Esophagus muscularis mucosa (tissue), 4 donors: ENCODE measurements at regions of chrX and their contacts with region 1.

Region 1: DNA sequence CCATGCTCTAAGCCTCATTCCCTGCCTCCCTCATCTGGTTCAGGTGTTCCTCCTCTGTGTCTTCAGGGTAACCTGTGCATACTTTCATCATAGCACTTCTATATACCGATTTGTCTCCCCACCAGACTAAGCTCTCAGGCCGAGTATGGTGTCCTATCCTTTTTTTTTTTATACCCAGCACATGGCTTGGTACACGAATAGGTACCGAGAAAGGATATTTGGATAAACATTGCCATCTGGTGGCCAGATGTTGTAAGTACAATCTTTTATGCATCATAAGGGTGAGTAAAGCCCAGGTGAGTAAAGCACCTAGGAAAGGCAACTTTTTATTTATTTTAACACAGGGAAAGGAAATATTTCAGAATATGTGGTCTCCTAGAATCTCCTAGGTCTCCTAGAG is 68.4 kb downstream of the MID2 start:
- DNase-seq: no peak
- H3K4me3 ChIP-seq: no peak overlapping the region
- H3K27ac ChIP-seq: no peak overlapping the region
- H3K4me1 ChIP-seq: no peaks in the 10 kb centered on the region
- H3K27me3 ChIP-seq: no peaks in the 10 kb centered on the region
- CTCF ChIP-seq: peak; percentile 50 to 63 (median 59)
- EP300 ChIP-seq: no peak
- POLR2A ChIP-seq: no peak

Region 2: DNA sequence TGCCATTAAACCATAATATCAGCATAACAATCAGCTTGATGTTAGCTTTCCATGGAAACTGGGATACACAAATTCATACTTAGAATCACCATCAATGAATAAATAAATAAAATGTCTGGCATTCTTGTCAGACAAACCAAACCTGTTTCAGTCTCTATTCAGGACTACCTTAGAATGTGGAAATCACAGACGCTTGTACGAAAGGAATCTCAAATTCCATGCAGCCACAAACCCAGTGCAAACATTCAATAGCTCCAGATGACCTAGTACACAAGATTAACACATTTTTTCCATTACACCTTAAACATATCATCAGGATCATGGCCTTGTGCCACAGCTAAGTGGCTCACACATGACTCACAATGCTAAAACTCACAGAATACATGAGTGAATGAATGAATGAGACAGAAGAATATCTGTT is 1591.8 kb before region 1 on chrX:
- intact Hi-C with region 1: no loop called
- DNase-seq: no peak
- H3K4me3 ChIP-seq: no peak overlapping the region
- H3K27ac ChIP-seq: no peak overlapping the region
- H3K4me1 ChIP-seq: no peaks in the 10 kb centered on the region
- H3K27me3 ChIP-seq: no peaks in the 10 kb centered on the region
- CTCF ChIP-seq: no peak
- EP300 ChIP-seq: no peak
- POLR2A ChIP-seq: no peak

Region 3: GRCh38 chrX:106999002-106999975 is 894.7 kb before region 1 on chrX:
- intact Hi-C with region 1: loop called (anchors 10 kb)
- DNase-seq: no peak
- H3K4me3 ChIP-seq: peak overlapping the region; percentile 63 to 74 (median 67)
- H3K27ac ChIP-seq: peak overlapping the region; percentile 74 to 84 (median 83)
- H3K4me1 ChIP-seq: peaks cover 0 to 9% (median 2%) of the 10 kb centered on the region in 4 donors
- H3K27me3 ChIP-seq: no peaks in the 10 kb centered on the region
- CTCF ChIP-seq: peak; percentile 41 to 52 (median 48)
- EP300 ChIP-seq: no peak
- POLR2A ChIP-seq: no peak

Region 4: GRCh38 chrX:107654872-107655761 is 238.9 kb before region 1 on chrX:
- intact Hi-C with region 1: loop called (anchors 5 kb)
- DNase-seq: peak; percentile 92
- H3K4me3 ChIP-seq: peak overlapping the region in 1 of 4 donors; percentile 16
- H3K27ac ChIP-seq: peak overlapping the region in 3 of 4 donors; percentile 10 to 52 (median 28)
- H3K4me1 ChIP-seq: peaks cover 0 to 23% (median 16%) of the 10 kb centered on the region in 4 donors
- H3K27me3 ChIP-seq: no peaks in the 10 kb centered on the region
- CTCF ChIP-seq: peak; percentile 54 to 73 (median 64)
- EP300 ChIP-seq: no peak
- POLR2A ChIP-seq: no peak

Region 5: DNA sequence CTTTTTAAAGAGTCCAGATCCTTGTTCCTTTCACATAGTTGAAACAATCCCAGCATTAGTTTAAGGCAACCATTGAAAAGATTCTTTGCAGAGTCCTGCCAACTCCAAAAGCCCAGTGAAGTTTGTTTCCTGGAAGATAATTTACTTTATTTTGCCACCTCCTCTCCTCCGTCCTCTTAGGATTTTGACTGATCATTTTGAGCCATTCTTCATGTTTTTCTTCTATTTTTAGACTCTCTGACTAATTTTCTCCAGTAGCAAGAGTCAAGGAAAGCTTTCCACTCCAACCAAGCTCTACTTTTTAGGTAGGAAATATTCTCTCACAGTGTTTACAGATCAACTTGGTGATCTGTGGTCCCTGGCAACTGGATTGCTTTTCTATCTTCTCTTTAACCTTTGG is 106.2 kb before region 1 on chrX:
- intact Hi-C with region 1: loop called (anchors 10 kb)
- DNase-seq: no peak
- H3K4me3 ChIP-seq: no peak overlapping the region
- H3K27ac ChIP-seq: peak overlapping the region; percentile 8 to 61 (median 54)
- H3K4me1 ChIP-seq: peaks cover 0 to 12% (median 4%) of the 10 kb centered on the region in 4 donors
- H3K27me3 ChIP-seq: no peaks in the 10 kb centered on the region
- CTCF ChIP-seq: no peak
- EP300 ChIP-seq: no peak
- POLR2A ChIP-seq: no peak